Calu3 (cell line): ENCODE measurements at regions of chr5 and their contacts with region 1.

Region 1: GRCh38 chr5:164097747-164098146 is 592.3 kb downstream of the MAT2B start:
- DNase-seq: no peak
- H3K4me3 Mint-ChIP-seq: no peak overlapping the region
- H3K27ac Mint-ChIP-seq: peak overlapping the region; percentile 63
- H3K4me1 Mint-ChIP-seq: peaks cover 19% of the 10 kb centered on the region
- H3K27me3 Mint-ChIP-seq: no peaks in the 10 kb centered on the region
- CTCF ChIP-seq: no peak

Region 2: GRCh38 chr5:164137095-164137494 is 39.3 kb after region 1 on chr5:
- CTCF ChIA-PET with region 1: no interaction called
- intact Hi-C with region 1: no loop called
- DNase-seq: no peak
- H3K4me3 Mint-ChIP-seq: no peak overlapping the region
- H3K27ac Mint-ChIP-seq: no peak overlapping the region
- H3K4me1 Mint-ChIP-seq: no peaks in the 10 kb centered on the region
- H3K27me3 Mint-ChIP-seq: no peaks in the 10 kb centered on the region
- CTCF ChIP-seq: no peak

Region 3: DNA sequence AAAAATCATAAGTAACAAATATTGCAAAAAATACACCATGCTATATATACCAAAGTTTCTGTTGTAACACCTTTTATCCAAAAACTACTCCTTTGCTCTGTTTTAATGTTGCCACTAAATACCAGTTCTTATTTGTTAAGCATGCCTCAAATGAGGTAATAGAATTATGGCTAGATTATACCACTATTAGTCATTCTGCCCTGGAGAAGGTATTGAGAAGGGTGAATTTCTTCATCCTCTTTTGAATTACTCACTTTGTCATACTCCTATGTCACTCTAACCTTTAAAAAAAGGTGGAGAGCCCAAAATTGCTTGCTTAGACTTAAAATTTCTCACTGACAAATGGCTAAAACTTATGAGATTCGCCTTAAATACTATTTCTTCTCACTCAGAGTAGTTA is 158.6 kb after region 1 on chr5:
- CTCF ChIA-PET with region 1: no interaction called
- intact Hi-C with region 1: loop called (anchors 5 kb)
- DNase-seq: no peak
- H3K4me3 Mint-ChIP-seq: no peak overlapping the region
- H3K27ac Mint-ChIP-seq: no peak overlapping the region
- H3K4me1 Mint-ChIP-seq: peaks cover 12% of the 10 kb centered on the region
- H3K27me3 Mint-ChIP-seq: no peaks in the 10 kb centered on the region
- CTCF ChIP-seq: no peak